HepG2 (cell line): ENCODE measurements at regions of chr9 and their contacts with region 1.

Region 1: DNA sequence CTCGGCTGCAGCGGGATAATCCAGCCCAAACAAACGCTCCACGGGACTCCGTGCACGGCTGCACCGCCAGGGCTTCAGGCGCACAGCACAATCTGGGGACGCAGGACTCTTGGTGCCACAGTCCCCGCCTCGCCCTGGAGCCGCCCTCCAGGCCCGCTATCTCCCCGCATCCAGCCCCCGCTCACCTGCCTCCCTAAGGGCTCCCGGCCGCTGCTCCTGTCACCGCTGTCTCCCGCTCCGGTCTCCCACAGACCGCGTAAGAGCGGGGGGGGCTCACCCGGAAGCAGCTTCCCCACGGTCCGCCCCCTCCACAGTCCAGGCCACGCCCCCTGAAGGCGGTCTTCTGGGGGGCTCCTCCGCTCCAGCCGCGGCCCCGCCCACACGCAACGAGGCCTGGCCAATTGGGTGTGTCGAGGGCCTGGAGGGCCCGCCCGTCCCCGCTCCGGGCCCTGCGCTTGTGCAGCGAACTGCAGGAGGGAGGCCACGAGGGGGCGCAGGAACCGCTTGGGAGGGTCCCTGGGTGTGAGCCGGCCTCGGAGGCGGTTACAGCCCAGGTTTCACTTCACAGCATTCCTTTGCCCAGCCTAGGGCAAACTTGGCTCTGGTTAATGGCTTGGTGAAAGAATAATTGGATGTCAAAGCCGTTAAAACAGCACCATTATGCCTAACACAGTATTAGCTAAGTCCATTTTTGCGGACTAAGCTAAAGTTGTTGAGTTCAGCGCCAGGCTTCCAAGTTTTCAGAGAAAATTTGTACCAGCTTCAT is at the start of gene ALAD:
- DNase-seq: peak; percentile 95
- ATAC-seq: peak; percentile 98
- H3K4me3 ChIP-seq: peak within 1 kb of the TSS; percentile 73 to 91 (median 86)
- H3K27ac ChIP-seq: peak within 1 kb of the TSS; percentile 44
- H3K4me1 ChIP-seq: peaks cover 49% of the 10 kb centered on the region
- H3K27me3 ChIP-seq: no peaks in the 10 kb centered on the region; a peak in 1 of 5 replicates
- CTCF ChIP-seq: peak; percentile 99
- EP300 ChIP-seq: peak in 1 of 2 experiments; percentile 36; a peak in 1 of 4 replicates
- POLR2A ChIP-seq: peak in 1 of 2 experiments; percentile 77; a peak in 2 of 4 replicates
- RAD21 ChIP-seq: peak; percentile 96
- total RNA-seq, gene ALAD: 21.8 and 23.0 TPM in 2 replicates

Region 2: DNA sequence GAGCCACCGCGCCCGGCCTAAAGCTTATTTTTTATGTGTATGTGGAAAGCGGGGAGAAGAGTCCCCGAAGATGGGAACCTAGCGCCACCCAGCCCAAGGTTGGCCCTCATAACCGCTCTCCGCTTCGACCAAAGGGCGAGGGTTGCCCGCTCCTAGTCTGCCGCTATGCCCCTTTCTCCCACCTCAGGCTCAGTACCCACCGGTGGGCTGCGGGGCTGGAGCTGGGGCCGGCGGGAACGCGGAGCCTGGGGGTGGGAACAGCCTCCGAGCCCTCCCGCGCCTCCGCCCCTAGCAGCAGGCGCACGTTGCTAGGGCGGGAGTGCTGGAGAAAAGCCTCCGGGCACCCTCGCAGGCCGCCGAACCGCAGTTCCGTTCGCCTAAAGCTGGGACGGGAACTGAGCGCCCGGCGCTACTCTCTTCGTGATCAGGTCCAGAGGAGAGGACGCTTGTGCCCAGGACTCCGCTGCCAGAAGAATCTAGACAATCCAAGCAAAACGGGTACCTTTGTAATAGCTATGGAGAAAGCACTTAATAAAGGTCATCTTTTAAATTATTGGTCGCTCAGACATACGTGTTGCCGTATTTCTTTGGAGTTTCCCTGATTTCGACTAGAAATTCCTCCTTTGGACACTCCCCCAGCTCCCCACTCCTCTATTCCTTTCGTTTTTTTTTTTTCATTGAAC is 61.1 kb before region 1 on chr9 and contains the start of gene WDR31:
- CTCF ChIA-PET with region 1: no interaction called
- POLR2A ChIA-PET with region 1: interaction called, 5 read pairs
- in situ Hi-C with region 1: no loop called
- intact Hi-C with region 1: loop called (anchors 5 kb)
- DNase-seq: peak; percentile 73
- ATAC-seq: peak; percentile 96
- H3K4me3 ChIP-seq: peak within 1 kb of the TSS; percentile 65 to 79 (median 65)
- H3K27ac ChIP-seq: peak within 1 kb of the TSS; percentile 53
- H3K4me1 ChIP-seq: peaks cover 28% of the 10 kb centered on the region
- H3K27me3 ChIP-seq: no peaks in the 10 kb centered on the region
- CTCF ChIP-seq: peak; percentile 43; the same call in 1 of the 2 replicates
- EP300 ChIP-seq: peak in 1 of 2 experiments; percentile 56; a peak in 1 of 4 replicates
- POLR2A ChIP-seq: peak; percentile 52 to 84; a peak in 3 of 4 replicates
- RAD21 ChIP-seq: peak; percentile 58
- total RNA-seq, gene WDR31: 0.33 and 0.56 TPM in 2 replicates

Region 3: GRCh38 chr9:113349445-113350094 is 51.6 kb before region 1 on chr9 and contains the start of gene BSPRY:
- CTCF ChIA-PET with region 1: interaction called, 28 read pairs
- POLR2A ChIA-PET with region 1: interaction called, 3 read pairs
- in situ Hi-C with region 1: loop called (anchors 5 kb)
- intact Hi-C with region 1: loop called (anchors 5 kb)
- DNase-seq: no peak
- ATAC-seq: peak; percentile 54
- H3K4me3 ChIP-seq: peak within 1 kb of the TSS; percentile 26 to 73 (median 42); a peak in 5 of 6 replicates
- H3K27ac ChIP-seq: no peak within 1 kb of the TSS
- H3K4me1 ChIP-seq: peaks cover 45% of the 10 kb centered on the region
- H3K27me3 ChIP-seq: peaks cover 0 to 32% of the 10 kb centered on the region in 2 experiments; a peak in 3 of 5 replicates
- CTCF ChIP-seq: no peak
- EP300 ChIP-seq: no peak
- POLR2A ChIP-seq: no peak
- RAD21 ChIP-seq: no peak
- total RNA-seq, gene BSPRY: 0.09 and 0.13 TPM in 2 replicates

Region 4: GRCh38 chr9:113355040-113355596 is 46.1 kb before region 1 on chr9:
- CTCF ChIA-PET with region 1: interaction called, 28 read pairs
- POLR2A ChIA-PET with region 1: interaction called, 4 read pairs
- in situ Hi-C with region 1: loop called (anchors 5 kb)
- intact Hi-C with region 1: no loop called
- DNase-seq: peak; percentile 77
- ATAC-seq: peak; percentile 88
- H3K4me3 ChIP-seq: no peak overlapping the region
- H3K27ac ChIP-seq: no peak overlapping the region
- H3K4me1 ChIP-seq: peaks cover 32% of the 10 kb centered on the region
- H3K27me3 ChIP-seq: peaks cover 0 to 14% of the 10 kb centered on the region in 2 experiments; a peak in 3 of 5 replicates
- CTCF ChIP-seq: peak; percentile 76
- EP300 ChIP-seq: no peak
- POLR2A ChIP-seq: no peak
- RAD21 ChIP-seq: peak; percentile 81

Region 5: GRCh38 chr9:113376634-113377567 is 24.3 kb before region 1 on chr9 and contains the start of gene HDHD3:
- CTCF ChIA-PET with region 1: no interaction called
- POLR2A ChIA-PET with region 1: interaction called, 35 read pairs
- in situ Hi-C with region 1: no loop called
- intact Hi-C with region 1: loop called (anchors 1 kb)
- DNase-seq: peak; percentile 71
- ATAC-seq: peak; percentile 83
- H3K4me3 ChIP-seq: peak within 1 kb of the TSS; percentile 80 to 99 (median 84)
- H3K27ac ChIP-seq: peak within 1 kb of the TSS; percentile 94
- H3K4me1 ChIP-seq: peaks cover 80% of the 10 kb centered on the region
- H3K27me3 ChIP-seq: no peaks in the 10 kb centered on the region
- CTCF ChIP-seq: no peak
- EP300 ChIP-seq: no peak
- POLR2A ChIP-seq: peak; percentile 70 to 89
- RAD21 ChIP-seq: peak; percentile 62
- total RNA-seq, gene HDHD3: 23.0 and 23.1 TPM in 2 replicates

Region 6: DNA sequence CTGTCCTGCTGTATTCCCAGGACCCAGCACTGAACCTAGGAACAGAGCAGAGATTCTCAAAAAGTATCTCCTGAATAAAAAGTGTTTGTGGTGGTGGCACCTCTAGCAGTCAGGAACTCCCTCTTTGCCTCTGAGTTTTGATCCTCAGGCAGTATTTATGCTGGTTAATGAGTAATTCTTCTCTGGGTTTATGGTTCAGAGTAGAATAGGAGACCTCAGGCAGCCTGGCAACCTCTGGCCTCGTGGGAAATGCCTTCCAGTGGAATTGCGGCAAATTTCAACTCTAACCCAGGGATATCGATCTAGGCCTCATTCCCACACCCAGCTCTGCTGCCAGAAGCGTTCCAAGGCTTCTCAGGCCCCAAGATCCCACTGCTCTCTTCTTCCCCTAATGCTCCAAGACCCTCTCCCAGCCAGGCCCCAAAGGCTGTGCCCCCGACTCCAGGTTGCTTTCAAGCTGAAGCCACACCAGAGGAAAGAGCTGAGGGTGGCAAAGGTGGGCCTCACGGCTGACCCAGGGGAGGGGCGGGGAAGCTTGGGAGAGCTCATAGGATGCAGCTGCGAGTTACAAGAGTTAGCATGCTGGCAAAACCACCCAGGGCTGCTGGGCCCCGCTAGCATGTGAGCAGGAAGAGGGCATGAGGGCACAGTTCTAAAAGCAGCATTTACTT is 13.5 kb before region 1 on chr9:
- CTCF ChIA-PET with region 1: interaction called, 4 read pairs
- POLR2A ChIA-PET with region 1: interaction called, 24 read pairs
- in situ Hi-C with region 1: no loop called
- intact Hi-C with region 1: no loop called
- DNase-seq: peak; percentile 91
- ATAC-seq: peak; percentile 95
- H3K4me3 ChIP-seq: peak overlapping the region; percentile 17 to 51 (median 35); a peak in 4 of 6 replicates
- H3K27ac ChIP-seq: peak overlapping the region; percentile 97
- H3K4me1 ChIP-seq: peaks cover 86% of the 10 kb centered on the region
- H3K27me3 ChIP-seq: no peaks in the 10 kb centered on the region
- CTCF ChIP-seq: 0 out of 2 replicates have a peak, but pooled peaks have one; percentile 18
- EP300 ChIP-seq: peak; percentile 41 to 83; a peak in 3 of 4 replicates
- POLR2A ChIP-seq: peak; percentile 63 to 65
- RAD21 ChIP-seq: 0 out of 2 replicates have a peak, but pooled peaks have one; percentile 29